K562 (cell line): ENCODE measurements at regions of chr22 and their contacts with region 1.

Region 1: GRCh38 chr22:41940832-41941765 is 5.9 kb downstream of the CENPM start:
- DNase-seq: peak; percentile 58 to 79 (median 65)
- ATAC-seq: peak; percentile 90
- H3K4me3 ChIP-seq: no peak overlapping the region
- H3K27ac ChIP-seq: peak overlapping the region; percentile 30; the same call in 2 of the 3 replicates
- H3K4me1 ChIP-seq: peaks cover 3 to 16% of the 10 kb centered on the region in 2 experiments; a peak in 3 of 5 replicates
- H3K27me3 ChIP-seq: no peaks in the 10 kb centered on the region
- CTCF ChIP-seq: peak; percentile 77 to 83 (median 79)
- EP300 ChIP-seq: no peak
- POLR2A ChIP-seq: no peak
- RAD21 ChIP-seq: peak; percentile 76 to 78

Region 2: DNA sequence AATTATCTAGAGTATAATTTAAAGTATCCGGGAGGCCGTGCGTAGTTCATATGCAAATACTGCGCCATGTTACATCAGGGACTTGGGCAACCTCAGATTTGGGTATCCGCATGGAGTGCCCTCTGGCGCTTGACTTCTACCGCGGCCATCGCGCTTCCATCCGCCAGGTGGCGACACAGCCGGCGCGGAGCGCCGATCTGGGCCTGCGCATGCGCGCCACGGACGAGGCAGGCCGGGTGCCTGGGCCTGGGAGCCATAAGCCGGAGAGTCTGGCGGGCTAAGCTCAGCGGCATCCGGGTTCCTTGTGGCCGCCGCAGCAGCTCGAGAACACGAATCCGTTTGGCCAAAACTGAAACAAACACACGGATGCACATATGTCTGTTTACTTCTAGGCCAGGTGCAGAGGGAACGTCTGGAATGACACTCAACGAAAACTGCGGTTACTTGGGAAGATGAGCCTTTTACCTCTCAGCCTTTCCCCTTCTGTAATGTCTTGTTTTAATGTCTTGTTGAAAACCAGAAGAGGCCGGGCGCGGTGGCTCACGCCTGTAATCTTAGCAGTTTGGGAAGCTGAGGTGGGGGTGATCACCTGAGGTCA is 274.3 kb before region 1 on chr22:
- CTCF ChIA-PET with region 1: interaction called, 11 read pairs
- POLR2A ChIA-PET with region 1: no interaction called
- in situ Hi-C with region 1: no loop called
- intact Hi-C with region 1: no loop called
- DNase-seq: peak; percentile 91 to 96 (median 94)
- ATAC-seq: peak; percentile 93
- H3K4me3 ChIP-seq: peak overlapping the region; percentile 30; the same call in 1 of the 2 replicates
- H3K27ac ChIP-seq: peak overlapping the region; percentile 94
- H3K4me1 ChIP-seq: peaks cover 6 to 14% of the 10 kb centered on the region in 2 experiments; a peak in 3 of 5 replicates
- H3K27me3 ChIP-seq: no peaks in the 10 kb centered on the region
- CTCF ChIP-seq: peak; percentile 95 to 100 (median 100)
- EP300 ChIP-seq: no peak
- POLR2A ChIP-seq: peak; percentile 85
- RAD21 ChIP-seq: peak; percentile 57 to 72

Region 3: DNA sequence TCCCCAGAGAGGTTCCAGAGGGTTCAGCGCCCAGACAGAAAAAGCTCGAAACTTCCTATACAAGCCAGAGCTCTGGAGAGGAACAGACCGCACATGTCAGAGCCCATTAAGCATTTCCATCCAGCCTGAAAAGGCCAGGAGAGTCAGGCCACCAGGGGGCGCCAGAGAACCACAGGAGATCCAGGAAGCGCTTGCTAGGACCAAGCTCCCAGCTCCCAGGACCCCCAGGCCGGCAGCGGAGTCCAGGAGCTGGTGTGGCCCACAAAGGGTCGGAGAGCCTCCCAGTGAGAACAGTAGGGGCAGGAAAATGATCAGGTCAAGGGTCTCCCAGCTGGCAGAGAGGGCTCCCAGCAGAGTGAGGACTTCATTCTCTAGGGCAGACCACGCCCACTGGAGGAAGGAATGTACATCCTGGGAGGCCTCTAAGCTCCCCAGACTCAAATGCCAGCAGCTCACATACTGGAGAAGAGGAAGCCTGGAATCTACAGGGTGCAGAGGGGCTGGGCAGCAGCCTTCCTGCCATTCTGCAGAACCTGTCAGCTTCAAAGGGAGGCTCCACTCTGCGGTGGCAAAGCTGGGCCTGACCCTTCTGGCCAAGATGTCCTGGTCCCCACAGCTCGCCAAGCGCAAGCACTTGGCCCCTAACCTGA is 243.8 kb before region 1 on chr22:
- CTCF ChIA-PET with region 1: interaction called, 29 read pairs
- POLR2A ChIA-PET with region 1: no interaction called
- in situ Hi-C with region 1: loop called (anchors 5 kb)
- intact Hi-C with region 1: loop called (anchors 1 kb)
- DNase-seq: peak; percentile 80 to 87 (median 82)
- ATAC-seq: peak; percentile 95
- H3K4me3 ChIP-seq: no peak overlapping the region
- H3K27ac ChIP-seq: no peak overlapping the region
- H3K4me1 ChIP-seq: peaks cover 2 to 18% of the 10 kb centered on the region in 2 experiments; a peak in 2 of 5 replicates
- H3K27me3 ChIP-seq: no peaks in the 10 kb centered on the region
- CTCF ChIP-seq: peak; percentile 83 to 93 (median 87)
- EP300 ChIP-seq: no peak
- POLR2A ChIP-seq: no peak
- RAD21 ChIP-seq: peak; percentile 76 to 81

Region 4: GRCh38 chr22:41822317-41823060 is 118.6 kb before region 1 on chr22:
- CTCF ChIA-PET with region 1: interaction called, 16 read pairs
- POLR2A ChIA-PET with region 1: no interaction called
- in situ Hi-C with region 1: no loop called
- intact Hi-C with region 1: loop called (anchors 5 kb)
- DNase-seq: peak; percentile 35 to 62 (median 40)
- ATAC-seq: peak; percentile 72
- H3K4me3 ChIP-seq: no peak overlapping the region
- H3K27ac ChIP-seq: no peak overlapping the region; the same call in 2 of the 3 replicates
- H3K4me1 ChIP-seq: peaks cover 14 to 20% of the 10 kb centered on the region in 2 experiments; a peak in 4 of 5 replicates
- H3K27me3 ChIP-seq: no peaks in the 10 kb centered on the region
- CTCF ChIP-seq: peak; percentile 33 to 60 (median 53); a peak in 5 of 6 replicates
- EP300 ChIP-seq: no peak
- POLR2A ChIP-seq: no peak
- RAD21 ChIP-seq: peak; percentile 47 to 66

Region 5: DNA sequence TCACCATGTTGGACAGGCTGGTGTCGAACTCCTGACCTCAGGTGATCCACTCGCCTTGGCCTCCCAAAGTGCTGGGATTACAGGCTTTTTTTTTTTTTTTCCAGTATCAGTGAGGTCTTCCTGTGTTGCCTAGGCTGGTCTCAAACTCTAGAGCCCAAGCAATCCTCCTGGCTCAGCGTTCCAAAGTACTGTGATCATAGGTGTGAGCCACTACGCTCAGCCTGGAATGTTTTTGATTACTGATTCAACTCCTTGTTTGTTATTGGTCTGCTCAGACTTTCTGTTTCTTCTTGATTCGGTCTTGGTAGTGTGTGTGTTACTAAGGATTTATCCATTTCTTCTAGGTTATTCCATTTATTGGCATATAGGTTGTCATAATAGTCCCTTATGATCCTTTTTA is 98.2 kb after region 1 on chr22:
- CTCF ChIA-PET with region 1: no interaction called
- POLR2A ChIA-PET with region 1: no interaction called
- in situ Hi-C with region 1: no loop called
- intact Hi-C with region 1: no loop called
- DNase-seq: no peak
- ATAC-seq: no peak
- H3K4me3 ChIP-seq: no peak overlapping the region
- H3K27ac ChIP-seq: no peak overlapping the region
- H3K4me1 ChIP-seq: no peaks in the 10 kb centered on the region
- H3K27me3 ChIP-seq: no peaks in the 10 kb centered on the region
- CTCF ChIP-seq: no peak
- EP300 ChIP-seq: no peak
- POLR2A ChIP-seq: no peak
- RAD21 ChIP-seq: no peak